ENCODE measurements at regions of chr7 and their contacts with region 1.

Region 1: GRCh38 chr7:121853307-121853706 is 19.7 kb upstream of the PTPRZ1 start:
- DNase-seq: peak; percentile 9
- H3K4me3 Mint-ChIP-seq: no peak overlapping the region
- H3K27ac Mint-ChIP-seq: no peak overlapping the region
- H3K4me1 Mint-ChIP-seq: no peaks in the 10 kb centered on the region
- H3K27me3 Mint-ChIP-seq: no peaks in the 10 kb centered on the region
- CTCF ChIP-seq: no peak

Region 2: GRCh38 chr7:121837462-121837861 is 15.8 kb before region 1 on chr7:
- CTCF ChIA-PET with region 1: no interaction called
- POLR2A ChIA-PET with region 1: interaction called, 3 read pairs
- intact Hi-C with region 1: loop called (anchors 2 kb)
- DNase-seq: no peak
- H3K4me3 Mint-ChIP-seq: no peak overlapping the region
- H3K27ac Mint-ChIP-seq: no peak overlapping the region
- H3K4me1 Mint-ChIP-seq: no peaks in the 10 kb centered on the region
- H3K27me3 Mint-ChIP-seq: no peaks in the 10 kb centered on the region
- CTCF ChIP-seq: no peak